Activated naive CD8-positive, alpha-beta T cell treated with anti-CD3 and anti-CD28 coated beads, Interleukin-2, amount 10 ng/mL, durations not matched to agents 7 days and 5 days (primary cell): ENCODE measurements at regions of chr17 and their contacts with region 1.

Region 1: GRCh38 chr17:7045909-7046724 is 2.2 kb upstream of the SLC16A11 start:
- DNase-seq: peak; percentile 63
- ATAC-seq: peak; percentile 26
- H3K4me3 Mint-ChIP-seq: peak overlapping the region; percentile 71
- H3K27ac Mint-ChIP-seq: peak overlapping the region; percentile 81
- H3K4me1 Mint-ChIP-seq: peaks cover 23% of the 10 kb centered on the region
- H3K27me3 Mint-ChIP-seq: peaks cover 12% of the 10 kb centered on the region

Region 2: DNA sequence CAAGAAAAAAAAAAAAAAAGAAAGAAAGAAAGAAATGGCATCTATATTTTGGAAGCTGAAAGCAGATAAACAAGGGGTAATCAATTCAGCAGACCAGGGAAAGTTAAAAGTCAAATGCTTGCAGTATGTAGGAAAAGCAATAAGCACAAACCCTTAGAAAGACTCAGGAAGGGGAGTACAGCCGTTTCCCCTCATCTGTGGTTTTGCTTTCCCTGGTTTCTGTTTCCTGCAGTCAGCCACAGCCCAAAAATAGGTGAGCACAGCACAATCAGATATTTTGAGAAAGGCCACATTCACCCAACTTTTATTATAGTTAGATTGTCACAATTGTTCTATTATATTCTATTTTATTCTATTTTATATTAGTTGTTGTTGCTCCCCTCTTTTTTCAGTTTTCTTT is 64.7 kb before region 1 on chr17:
- POLR2A ChIA-PET with region 1: no interaction called
- DNase-seq: no peak
- ATAC-seq: peak; percentile 33
- H3K4me3 Mint-ChIP-seq: peak overlapping the region; percentile 60
- H3K27ac Mint-ChIP-seq: no peak overlapping the region
- H3K4me1 Mint-ChIP-seq: peaks cover 19% of the 10 kb centered on the region
- H3K27me3 Mint-ChIP-seq: no peaks in the 10 kb centered on the region

Region 3: GRCh38 chr17:7014261-7014994 is 31.7 kb before region 1 on chr17:
- POLR2A ChIA-PET with region 1: interaction called, 12 read pairs
- DNase-seq: peak; percentile 98
- ATAC-seq: peak; percentile 87
- H3K4me3 Mint-ChIP-seq: peak overlapping the region; percentile 96
- H3K27ac Mint-ChIP-seq: peak overlapping the region; percentile 99
- H3K4me1 Mint-ChIP-seq: peaks cover 60% of the 10 kb centered on the region
- H3K27me3 Mint-ChIP-seq: no peaks in the 10 kb centered on the region

Region 4: GRCh38 chr17:7021993-7022778 is 23.9 kb before region 1 on chr17:
- POLR2A ChIA-PET with region 1: interaction called, 11 read pairs
- DNase-seq: peak; percentile 92
- ATAC-seq: peak; percentile 73
- H3K4me3 Mint-ChIP-seq: peak overlapping the region; percentile 61
- H3K27ac Mint-ChIP-seq: peak overlapping the region; percentile 70
- H3K4me1 Mint-ChIP-seq: peaks cover 42% of the 10 kb centered on the region
- H3K27me3 Mint-ChIP-seq: no peaks in the 10 kb centered on the region

Region 5: DNA sequence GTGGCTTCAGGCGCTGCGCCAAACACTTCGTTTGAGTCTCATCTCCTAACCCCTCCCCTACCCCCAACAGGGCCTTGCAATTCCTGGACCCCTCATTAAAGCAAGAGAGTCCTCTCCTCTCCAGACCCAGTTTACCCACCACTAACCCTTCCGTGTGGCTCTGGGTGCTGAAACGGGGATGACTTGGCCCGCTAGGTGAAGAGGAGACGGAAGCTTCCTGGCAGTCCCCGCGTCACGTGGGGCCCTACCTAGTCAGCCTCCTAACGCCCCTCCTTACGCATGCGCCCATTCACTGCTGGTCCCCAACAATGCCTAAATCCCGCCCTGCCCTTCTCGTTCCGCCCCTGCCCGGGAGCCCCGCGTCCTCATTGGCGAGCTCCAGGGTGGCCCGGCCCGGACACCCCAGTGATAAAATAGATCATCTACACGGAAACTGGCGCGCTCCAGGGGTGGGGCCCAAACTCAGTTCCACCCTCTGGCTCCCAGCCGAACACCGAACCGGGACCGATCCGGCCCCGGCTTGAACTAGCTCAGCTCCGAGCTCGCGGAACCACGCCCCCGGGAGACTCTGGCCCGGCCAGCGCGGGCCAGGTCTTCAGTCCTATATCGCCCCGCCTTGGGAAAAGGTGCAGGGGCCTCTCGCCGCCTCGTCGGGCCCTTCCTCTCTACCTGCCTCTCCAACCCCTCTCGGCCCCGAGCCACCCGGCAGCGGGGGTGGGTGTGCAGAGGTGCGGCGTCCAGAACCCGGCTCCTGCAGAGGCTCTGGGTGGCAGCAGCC is 10.3 kb before region 1 on chr17 and contains the start of gene SLC16A13:
- POLR2A ChIA-PET with region 1: interaction called, 21 read pairs
- DNase-seq: peak; percentile 94
- ATAC-seq: peak; percentile 93
- H3K4me3 Mint-ChIP-seq: peak within 1 kb of the TSS; percentile 95
- H3K27ac Mint-ChIP-seq: peak within 1 kb of the TSS; percentile 89
- H3K4me1 Mint-ChIP-seq: peaks cover 40% of the 10 kb centered on the region
- H3K27me3 Mint-ChIP-seq: no peaks in the 10 kb centered on the region
- total RNA-seq, gene SLC16A13: 15.8 to 16.0 TPM

Region 6: DNA sequence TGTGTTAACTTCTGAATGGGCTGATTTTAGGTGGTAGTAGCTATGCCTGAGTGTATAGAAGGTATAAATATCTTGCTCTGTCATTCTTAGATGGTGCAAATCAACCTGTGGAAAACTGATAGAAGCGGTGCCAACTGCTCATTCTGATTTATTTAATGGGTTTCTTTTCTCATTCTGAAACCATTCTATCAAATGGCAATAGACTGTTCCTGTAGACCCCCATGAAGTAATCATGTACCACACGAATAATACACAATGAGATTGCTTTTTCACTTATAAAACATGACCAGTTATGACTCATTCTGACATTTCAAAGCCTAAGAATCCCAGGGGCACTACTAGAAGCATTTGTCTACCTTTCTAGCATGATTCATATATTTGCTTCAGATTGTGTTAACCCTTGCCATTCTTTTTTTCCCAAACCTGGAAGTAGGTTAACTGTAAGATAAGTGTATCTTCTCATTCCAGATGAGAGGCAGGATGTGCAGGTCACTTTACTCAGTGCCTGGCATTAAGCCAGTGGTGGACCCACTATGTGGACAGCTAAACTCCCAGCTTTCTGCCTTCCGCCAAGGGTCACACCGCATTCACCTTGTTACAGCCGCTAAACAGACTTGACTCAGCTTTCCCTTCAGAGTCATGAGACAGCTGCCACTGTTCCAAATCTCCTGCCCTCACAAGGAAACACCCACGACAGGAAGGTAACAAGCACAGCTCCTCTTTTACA is 14.2 kb after region 1 on chr17:
- POLR2A ChIA-PET with region 1: no interaction called
- DNase-seq: no peak
- ATAC-seq: no peak
- H3K4me3 Mint-ChIP-seq: no peak overlapping the region
- H3K27ac Mint-ChIP-seq: no peak overlapping the region
- H3K4me1 Mint-ChIP-seq: peaks cover 1% of the 10 kb centered on the region
- H3K27me3 Mint-ChIP-seq: peaks cover 2% of the 10 kb centered on the region